ENCODE measurements at regions of chr13 and their contacts with region 1.

Region 1: GRCh38 chr13:91557328-91558090 is 159.1 kb downstream of the GPC5 start:
- DNase-seq: no peak

Region 2: GRCh38 chr13:90272356-90272755 is 1285.2 kb before region 1 on chr13:
- intact Hi-C with region 1: no loop called
- DNase-seq: no peak

Region 3: DNA sequence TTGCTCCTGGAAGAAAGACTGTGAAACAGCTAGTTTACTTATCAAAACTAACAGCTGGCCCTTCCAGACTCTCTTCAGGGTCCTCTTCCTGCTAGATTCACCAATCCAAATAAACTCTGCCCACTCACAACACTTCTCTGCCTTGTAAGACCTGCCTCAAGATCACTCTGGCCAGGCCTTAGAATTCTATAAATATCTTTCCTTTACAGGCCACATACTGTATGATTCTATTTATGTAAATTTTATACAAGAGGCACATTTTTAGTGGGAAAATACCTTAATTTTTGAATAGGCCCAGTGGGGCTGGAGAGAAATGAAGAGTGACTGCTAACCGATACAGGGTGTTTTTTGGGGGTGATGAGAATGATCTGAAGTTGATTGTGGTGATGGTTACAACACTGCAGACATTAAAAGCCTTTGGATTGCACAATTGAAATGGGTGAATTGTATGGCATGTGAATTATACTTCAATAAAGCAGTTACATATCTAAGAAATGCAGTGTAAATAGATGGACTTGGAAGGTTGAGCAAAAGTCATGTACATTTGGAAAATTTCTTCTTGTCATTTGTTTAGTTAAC is 17.3 kb before region 1 on chr13:
- intact Hi-C with region 1: loop called in 1 of 2 experiments (anchors 1 kb)
- DNase-seq: no peak

Measured in posterior vena cava (tissue), 2 donors.